ENCODE measurements at regions of chr12 and their contacts with region 1.

Region 1: GRCh38 chr12:12654691-12655460 is 41.1 kb downstream of the GPR19 start:
- DNase-seq: no peak
- ATAC-seq: no peak

Region 2: DNA sequence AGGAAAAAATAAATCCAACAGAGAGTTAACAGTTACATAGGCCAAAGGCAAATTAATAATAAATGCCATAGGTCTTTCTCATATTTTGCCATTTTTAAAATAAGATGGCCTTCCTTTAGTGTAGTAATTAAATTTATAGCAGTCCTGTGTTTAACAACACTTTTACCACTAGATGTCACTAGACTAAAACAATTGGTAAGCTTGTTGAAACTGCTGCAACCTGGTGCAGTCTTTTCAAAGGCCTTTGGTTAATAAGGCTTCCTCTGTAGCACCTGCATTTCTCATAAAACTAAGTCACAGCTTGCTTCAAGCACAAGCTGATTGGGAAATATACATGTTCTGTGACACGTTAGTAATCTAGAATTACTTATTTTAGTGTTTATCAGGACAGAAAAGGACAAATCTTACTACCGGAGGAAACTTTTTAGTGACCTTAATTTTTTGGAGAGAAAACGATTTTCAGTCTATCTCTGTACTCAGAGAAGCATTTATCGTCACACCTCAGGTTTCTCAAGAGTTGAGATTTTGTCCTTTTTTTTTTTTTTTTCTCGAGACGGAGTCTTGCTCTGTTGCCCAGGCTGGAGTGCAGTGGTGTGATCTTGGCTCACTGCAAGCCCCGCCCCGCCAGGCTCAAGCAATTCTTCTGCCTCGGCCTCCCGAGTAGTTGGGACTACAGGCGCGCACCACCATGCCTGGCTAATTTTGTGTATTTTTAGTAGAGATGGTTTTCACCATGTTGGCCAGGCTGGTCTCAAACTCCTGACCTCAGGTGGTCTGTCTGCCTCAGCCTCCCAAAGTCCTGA is 278.0 kb before region 1 on chr12:
- intact Hi-C with region 1: loop called (anchors 5 kb)
- DNase-seq: peak; percentile 60
- ATAC-seq: peak; percentile 71

Measured in Right ventricle myocardium inferior (tissue), 1 donor.